Breast epithelium (tissue), 4 donors: ENCODE measurements at regions of chr7 and their contacts with region 1.

Region 1: DNA sequence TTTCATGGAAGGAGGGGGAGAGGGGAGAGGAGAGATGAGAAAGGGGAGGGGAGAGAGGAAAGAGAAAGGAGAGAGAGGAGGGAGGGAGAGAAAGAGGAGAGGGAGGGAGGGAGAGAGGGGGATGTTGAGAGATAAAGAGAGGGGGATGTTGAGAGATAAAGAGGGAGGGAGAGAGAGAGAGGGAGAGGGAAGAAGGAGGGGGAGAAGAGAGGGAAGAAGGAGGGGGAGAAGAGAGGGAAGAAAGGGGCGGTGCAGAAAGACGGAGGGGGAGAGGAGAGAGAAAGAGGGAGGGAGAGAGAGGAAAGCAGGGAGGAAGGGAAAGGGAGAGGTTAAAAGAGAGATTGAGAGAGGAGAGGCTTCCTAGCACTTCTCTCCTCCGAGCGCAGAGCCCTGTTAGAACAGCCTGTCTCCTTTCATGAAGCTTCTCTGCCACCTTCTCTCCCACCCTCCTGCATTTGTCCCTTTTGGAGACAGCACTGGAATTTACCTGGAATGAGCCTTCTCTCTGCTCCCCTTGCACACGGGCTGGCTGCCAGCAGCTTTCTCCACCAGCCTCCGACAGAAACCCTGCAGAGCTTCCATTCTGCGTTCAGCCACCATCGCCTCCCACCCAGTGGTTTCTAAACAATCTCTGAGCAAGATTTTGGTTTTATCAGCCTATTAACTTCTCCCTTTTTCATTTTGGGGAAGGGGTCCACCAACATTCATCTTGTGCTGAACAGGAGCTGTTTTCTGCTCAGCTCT is 74.0 kb upstream of the CARD11 start:
- DNase-seq: no peak
- H3K4me3 ChIP-seq: no peak overlapping the region
- H3K27ac ChIP-seq: no peak overlapping the region
- H3K4me1 ChIP-seq: no peaks in the 10 kb centered on the region
- H3K27me3 ChIP-seq: peaks cover 0 to 4% of the 10 kb centered on the region in 2 donors
- CTCF ChIP-seq: no peak
- POLR2A ChIP-seq: no peak

Region 2: GRCh38 chr7:3068530-3068929 is 49.1 kb before region 1 on chr7:
- intact Hi-C with region 1: no loop called
- DNase-seq: no peak
- H3K4me3 ChIP-seq: no peak overlapping the region
- H3K27ac ChIP-seq: no peak overlapping the region
- H3K4me1 ChIP-seq: no peaks in the 10 kb centered on the region
- H3K27me3 ChIP-seq: peaks cover 0 to 6% of the 10 kb centered on the region in 2 donors
- CTCF ChIP-seq: no peak
- POLR2A ChIP-seq: no peak

Region 3: GRCh38 chr7:3106361-3106826 is 11.3 kb before region 1 on chr7:
- intact Hi-C with region 1: loop called (anchors 2 kb)
- DNase-seq: peak in 1 of 2 donors; percentile 6
- H3K4me3 ChIP-seq: no peak overlapping the region
- H3K27ac ChIP-seq: no peak overlapping the region
- H3K4me1 ChIP-seq: no peaks in the 10 kb centered on the region
- H3K27me3 ChIP-seq: no peaks in the 10 kb centered on the region
- CTCF ChIP-seq: no peak
- POLR2A ChIP-seq: no peak

Region 4: DNA sequence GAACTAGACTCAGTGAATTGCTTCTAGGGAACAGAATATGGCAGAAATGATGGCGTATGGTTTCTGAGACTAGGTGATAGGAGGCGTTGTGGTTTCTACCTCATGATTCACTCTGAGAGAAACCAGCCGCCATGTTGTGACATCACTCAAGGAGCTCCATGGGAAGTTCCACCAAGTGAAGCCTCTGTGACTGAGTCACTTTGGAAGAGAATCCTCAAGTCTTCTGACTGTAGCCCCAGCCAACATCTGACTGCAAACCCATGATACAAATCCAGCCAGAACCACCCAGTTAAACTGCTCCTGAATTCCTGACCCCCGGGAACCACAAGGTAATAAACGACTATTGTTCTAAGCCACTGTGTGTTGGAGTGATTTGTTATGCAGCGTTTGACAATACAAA is 17.1 kb after region 1 on chr7:
- intact Hi-C with region 1: no loop called
- DNase-seq: no peak
- H3K4me3 ChIP-seq: no peak overlapping the region
- H3K27ac ChIP-seq: no peak overlapping the region
- H3K4me1 ChIP-seq: no peaks in the 10 kb centered on the region
- H3K27me3 ChIP-seq: peaks cover 0 to 3% of the 10 kb centered on the region in 2 donors
- CTCF ChIP-seq: no peak
- POLR2A ChIP-seq: no peak

Region 5: GRCh38 chr7:3146571-3147226 is 29.0 kb after region 1 on chr7:
- intact Hi-C with region 1: no loop called
- DNase-seq: peak in 1 of 2 donors; percentile 33
- H3K4me3 ChIP-seq: no peak overlapping the region
- H3K27ac ChIP-seq: no peak overlapping the region
- H3K4me1 ChIP-seq: no peaks in the 10 kb centered on the region
- H3K27me3 ChIP-seq: no peaks in the 10 kb centered on the region
- CTCF ChIP-seq: no peak
- POLR2A ChIP-seq: no peak